ENCODE measurements at regions of chr16 and their contacts with region 1.

Region 1: DNA sequence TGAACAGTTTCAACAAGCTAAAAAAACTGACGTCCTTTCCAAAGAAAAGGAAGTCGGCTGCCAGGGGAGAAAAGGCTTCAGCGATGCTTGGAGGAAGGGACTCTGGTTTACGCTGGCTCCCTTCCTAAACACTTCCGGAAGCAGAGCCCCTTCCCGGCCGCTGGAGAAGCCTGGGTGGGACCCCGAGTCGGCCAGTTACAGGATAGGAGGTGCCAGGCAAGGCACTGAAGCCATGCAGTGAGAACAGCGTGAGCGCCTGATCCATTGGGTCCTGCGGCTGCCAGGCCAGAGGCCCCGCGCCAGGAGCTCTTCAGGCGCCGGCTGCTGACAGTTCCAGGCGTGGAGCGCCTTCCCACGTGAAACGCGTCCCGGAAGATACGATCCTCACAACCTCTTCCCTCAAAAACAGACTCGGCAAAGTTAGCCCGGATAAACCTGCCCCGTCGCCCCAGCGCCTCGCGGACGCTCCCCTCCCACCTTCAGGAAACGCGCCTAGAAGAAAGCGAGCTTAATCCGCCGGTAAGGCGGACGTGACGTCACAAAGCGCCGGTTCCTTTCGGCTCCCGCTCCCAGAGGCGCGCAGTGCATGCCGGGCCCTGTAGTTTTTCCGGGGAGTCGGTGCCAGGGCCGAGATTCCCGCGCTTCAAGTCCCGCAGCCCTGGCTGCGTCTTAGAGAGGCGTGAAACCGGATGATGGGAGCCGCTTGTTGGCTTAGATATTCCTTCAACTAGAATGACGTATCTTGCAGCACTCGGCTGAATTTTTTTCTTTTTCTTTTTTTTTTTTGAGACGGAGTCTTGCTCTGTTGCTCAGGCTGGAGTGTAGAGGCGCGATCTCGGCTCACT is at the start of gene ADAT1:
- DNase-seq: peak; percentile 82
- ATAC-seq: peak; percentile 97
- H3K4me3 ChIP-seq: peak within 1 kb of the TSS; percentile 93
- H3K27ac ChIP-seq: peak within 1 kb of the TSS; percentile 90
- H3K4me1 ChIP-seq: peaks cover 24% of the 10 kb centered on the region
- H3K27me3 ChIP-seq: no peaks in the 10 kb centered on the region
- CTCF ChIP-seq: no peak
- EP300 ChIP-seq: no peak
- POLR2A ChIP-seq: peak; percentile 95
- RAD21 ChIP-seq: no peak
- polyA plus RNA-seq, gene ADAT1: 26.2 to 29.5 TPM

Region 2: GRCh38 chr16:75464130-75464918 is 158.7 kb before region 1 on chr16 and contains the start of gene TMEM170A:
- CTCF ChIA-PET with region 1: interaction called, 7 read pairs
- POLR2A ChIA-PET with region 1: no interaction called
- RAD21 ChIA-PET with region 1: interaction called, 4 read pairs
- SMC1A ChIA-PET with region 1: no interaction called
- in situ Hi-C with region 1: loop called (anchors 10 kb)
- intact Hi-C with region 1: loop called (anchors 2 kb)
- DNase-seq: peak; percentile 94
- ATAC-seq: peak; percentile 96
- H3K4me3 ChIP-seq: peak within 1 kb of the TSS; percentile 89
- H3K27ac ChIP-seq: peak within 1 kb of the TSS; percentile 85
- H3K4me1 ChIP-seq: peaks cover 6% of the 10 kb centered on the region
- H3K27me3 ChIP-seq: no peaks in the 10 kb centered on the region
- CTCF ChIP-seq: peak; percentile 100; a peak in 5 of 6 replicates
- EP300 ChIP-seq: no peak
- POLR2A ChIP-seq: peak; percentile 96
- RAD21 ChIP-seq: peak; percentile 67
- polyA plus RNA-seq, gene TMEM170A: 7.3 to 7.8 TPM

Region 3: GRCh38 chr16:75519881-75520280 is 103.1 kb before region 1 on chr16:
- CTCF ChIA-PET with region 1: interaction called, 153 read pairs
- POLR2A ChIA-PET with region 1: interaction called, 16 read pairs
- RAD21 ChIA-PET with region 1: interaction called, 9 read pairs
- SMC1A ChIA-PET with region 1: interaction called, 21 read pairs
- in situ Hi-C with region 1: no loop called
- intact Hi-C with region 1: loop called (anchors 2 kb)
- DNase-seq: no peak
- ATAC-seq: no peak
- H3K4me3 ChIP-seq: no peak overlapping the region
- H3K27ac ChIP-seq: no peak overlapping the region
- H3K4me1 ChIP-seq: no peaks in the 10 kb centered on the region
- H3K27me3 ChIP-seq: no peaks in the 10 kb centered on the region
- CTCF ChIP-seq: no peak
- EP300 ChIP-seq: no peak
- POLR2A ChIP-seq: no peak
- RAD21 ChIP-seq: no peak

Region 4: GRCh38 chr16:75555707-75556430 is 67.1 kb before region 1 on chr16 and contains the start of gene TMEM231:
- CTCF ChIA-PET with region 1: interaction called, 53 read pairs
- POLR2A ChIA-PET with region 1: interaction called, 3 read pairs
- RAD21 ChIA-PET with region 1: interaction called, 16 read pairs
- SMC1A ChIA-PET with region 1: interaction called, 17 read pairs
- in situ Hi-C with region 1: no loop called
- intact Hi-C with region 1: loop called (anchors 2 kb)
- DNase-seq: no peak
- ATAC-seq: peak; percentile 96
- H3K4me3 ChIP-seq: peak within 1 kb of the TSS; percentile 81
- H3K27ac ChIP-seq: peak within 1 kb of the TSS; percentile 65
- H3K4me1 ChIP-seq: peaks cover 4% of the 10 kb centered on the region; the same call in 1 of the 2 replicates
- H3K27me3 ChIP-seq: no peaks in the 10 kb centered on the region
- CTCF ChIP-seq: no peak
- EP300 ChIP-seq: 0 out of 4 replicates have a peak, but pooled peaks of 1 of the 2 experiments have one; percentile 21
- POLR2A ChIP-seq: peak; percentile 72
- RAD21 ChIP-seq: no peak
- polyA plus RNA-seq, gene TMEM231: 1.2 TPM

Region 5: DNA sequence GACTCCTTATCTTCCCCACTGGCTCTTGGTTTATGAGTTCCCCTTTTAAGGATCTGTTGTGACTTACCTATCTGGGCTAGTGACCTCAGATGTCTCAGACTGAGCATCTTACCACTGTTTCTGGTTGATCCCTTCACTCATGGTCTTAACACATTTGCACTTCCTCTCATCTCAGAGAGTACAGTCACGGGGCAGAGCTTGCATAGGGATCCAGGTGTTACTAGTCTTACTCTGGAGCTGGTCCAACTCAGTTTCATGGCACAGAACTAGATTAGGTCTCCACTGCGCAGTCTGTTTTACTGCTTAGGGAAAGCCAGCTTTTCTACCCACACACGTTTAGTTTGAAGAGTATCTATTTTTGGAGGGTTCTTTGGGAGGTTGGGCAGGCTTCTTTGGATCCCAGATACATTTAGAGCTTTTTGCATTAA is 46.6 kb before region 1 on chr16:
- CTCF ChIA-PET with region 1: interaction called, 11 read pairs
- POLR2A ChIA-PET with region 1: interaction called, 116 read pairs
- RAD21 ChIA-PET with region 1: interaction called, 27 read pairs
- SMC1A ChIA-PET with region 1: interaction called, 42 read pairs
- in situ Hi-C with region 1: no loop called
- intact Hi-C with region 1: loop called (anchors 2 kb)
- DNase-seq: no peak
- ATAC-seq: peak; percentile 49
- H3K4me3 ChIP-seq: no peak overlapping the region
- H3K27ac ChIP-seq: peak overlapping the region; percentile 49
- H3K4me1 ChIP-seq: peaks cover 63% of the 10 kb centered on the region
- H3K27me3 ChIP-seq: no peaks in the 10 kb centered on the region
- CTCF ChIP-seq: no peak
- EP300 ChIP-seq: no peak
- POLR2A ChIP-seq: no peak
- RAD21 ChIP-seq: no peak

Region 6: GRCh38 chr16:75764154-75764768 is 141.3 kb after region 1 on chr16:
- CTCF ChIA-PET with region 1: interaction called, 13 read pairs
- POLR2A ChIA-PET with region 1: no interaction called
- RAD21 ChIA-PET with region 1: interaction called, 6 read pairs
- SMC1A ChIA-PET with region 1: interaction called, 5 read pairs
- in situ Hi-C with region 1: no loop called
- intact Hi-C with region 1: loop called (anchors 1 kb)
- DNase-seq: peak; percentile 53
- ATAC-seq: peak; percentile 90
- H3K4me3 ChIP-seq: no peak overlapping the region
- H3K27ac ChIP-seq: no peak overlapping the region
- H3K4me1 ChIP-seq: peaks cover 5% of the 10 kb centered on the region
- H3K27me3 ChIP-seq: no peaks in the 10 kb centered on the region; a peak in 1 of 4 replicates
- CTCF ChIP-seq: peak; percentile 80 to 91 (median 91)
- EP300 ChIP-seq: no peak
- POLR2A ChIP-seq: no peak
- RAD21 ChIP-seq: peak; percentile 98

Measured in GM12878 (cell line).